AG04450 (cell line): ENCODE measurements at regions of chr12 and their contacts with region 1.

Region 1: DNA sequence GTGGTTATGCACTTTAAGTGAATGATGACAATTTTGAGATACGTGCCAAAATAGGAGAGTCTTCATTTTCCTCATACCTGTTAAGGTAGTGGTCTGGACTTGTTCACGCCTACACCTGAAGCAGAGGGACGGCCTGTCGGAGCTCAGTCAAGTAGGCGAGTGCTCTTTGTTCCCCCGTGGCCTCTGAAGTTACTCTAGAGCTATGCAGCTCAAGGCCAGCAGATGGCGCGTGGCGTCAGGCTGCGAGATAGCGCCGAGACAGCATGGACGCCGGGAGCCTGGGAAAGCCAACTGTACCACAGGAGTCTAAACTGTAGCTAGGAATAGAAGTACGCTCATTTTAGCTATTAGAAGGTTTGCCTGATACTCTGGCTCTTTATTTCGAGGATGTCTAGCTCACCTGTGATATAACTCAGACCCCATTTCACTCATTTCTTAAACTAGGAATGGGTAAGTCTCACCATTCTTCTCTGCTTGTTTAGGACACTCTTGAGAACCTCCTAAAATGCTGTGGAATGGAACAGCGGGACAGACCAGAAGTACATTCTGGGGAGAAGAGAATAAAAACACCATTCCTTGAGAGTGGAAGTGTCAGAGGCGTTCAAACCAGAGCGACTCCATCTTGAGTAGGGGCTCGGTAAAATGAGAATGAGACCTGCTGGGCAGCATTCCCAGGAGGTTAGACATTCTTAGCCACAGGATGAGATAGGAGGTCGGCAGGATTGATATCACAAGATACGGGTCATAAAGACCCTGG is 267.4 kb upstream of the HMGA2 start:
- DNase-seq: peak; percentile 69
- H3K4me3 ChIP-seq: no peak overlapping the region
- H3K27ac ChIP-seq: no peak overlapping the region
- H3K27me3 ChIP-seq: no peaks in the 10 kb centered on the region
- CTCF ChIP-seq: peak; percentile 90

Region 2: GRCh38 chr12:64696080-64696741 is 860.6 kb before region 1 on chr12:
- CTCF ChIA-PET with region 1: no interaction called
- POLR2A ChIA-PET with region 1: no interaction called
- DNase-seq: no peak
- H3K4me3 ChIP-seq: no peak overlapping the region
- H3K27ac ChIP-seq: no peak overlapping the region
- H3K27me3 ChIP-seq: no peaks in the 10 kb centered on the region
- CTCF ChIP-seq: peak; percentile 34; the same call in 1 of the 2 replicates

Region 3: GRCh38 chr12:64826234-64826633 is 730.6 kb before region 1 on chr12:
- CTCF ChIA-PET with region 1: no interaction called
- POLR2A ChIA-PET with region 1: no interaction called
- DNase-seq: no peak
- H3K4me3 ChIP-seq: no peak overlapping the region
- H3K27ac ChIP-seq: no peak overlapping the region
- H3K27me3 ChIP-seq: peaks cover 46% of the 10 kb centered on the region
- CTCF ChIP-seq: no peak

Region 4: GRCh38 chr12:65139389-65139788 is 417.5 kb before region 1 on chr12:
- CTCF ChIA-PET with region 1: no interaction called
- POLR2A ChIA-PET with region 1: no interaction called
- DNase-seq: no peak
- H3K4me3 ChIP-seq: no peak overlapping the region
- H3K27ac ChIP-seq: no peak overlapping the region
- H3K27me3 ChIP-seq: peaks cover 13% of the 10 kb centered on the region
- CTCF ChIP-seq: no peak

Region 5: DNA sequence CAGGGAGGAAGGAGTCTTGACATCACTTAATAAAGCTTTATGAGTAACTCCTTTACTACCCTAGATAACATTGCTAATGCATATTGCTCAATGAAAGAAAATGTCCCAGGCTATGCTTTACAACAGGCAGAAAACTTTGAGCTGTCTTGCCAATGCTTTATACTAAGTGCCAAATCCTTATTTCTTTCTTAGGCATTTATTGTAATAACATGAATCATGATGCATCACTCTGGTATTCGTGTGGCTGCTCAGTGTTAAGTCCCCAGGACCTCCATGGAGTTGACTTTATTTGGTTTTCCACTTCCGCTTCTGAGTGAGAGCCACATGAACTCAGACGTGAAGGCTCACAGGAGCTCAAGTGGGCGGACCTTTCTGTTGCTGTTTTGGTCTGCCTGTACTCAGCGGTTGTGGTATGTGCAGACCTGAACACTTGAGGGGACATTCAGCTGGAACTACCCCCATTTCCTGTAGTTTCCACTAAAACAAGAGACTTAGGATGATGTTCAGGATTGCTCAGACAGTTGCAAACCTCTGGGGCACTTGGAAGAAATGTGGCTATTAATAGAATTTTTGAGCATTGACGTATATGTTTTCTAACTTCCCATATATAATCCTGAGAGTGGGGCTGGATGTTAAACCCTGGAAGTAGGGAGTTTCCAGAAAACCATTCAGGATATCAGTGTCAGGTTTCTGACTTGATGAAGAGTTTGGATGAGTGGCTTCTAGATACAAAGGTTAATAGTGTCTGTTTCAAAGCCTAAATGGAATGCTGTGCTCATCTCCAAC is 19.8 kb before region 1 on chr12:
- CTCF ChIA-PET with region 1: interaction called, 14 read pairs
- POLR2A ChIA-PET with region 1: no interaction called
- DNase-seq: peak; percentile 99
- H3K4me3 ChIP-seq: no peak overlapping the region
- H3K27ac ChIP-seq: peak overlapping the region; percentile 93
- H3K27me3 ChIP-seq: no peaks in the 10 kb centered on the region
- CTCF ChIP-seq: no peak

Region 6: DNA sequence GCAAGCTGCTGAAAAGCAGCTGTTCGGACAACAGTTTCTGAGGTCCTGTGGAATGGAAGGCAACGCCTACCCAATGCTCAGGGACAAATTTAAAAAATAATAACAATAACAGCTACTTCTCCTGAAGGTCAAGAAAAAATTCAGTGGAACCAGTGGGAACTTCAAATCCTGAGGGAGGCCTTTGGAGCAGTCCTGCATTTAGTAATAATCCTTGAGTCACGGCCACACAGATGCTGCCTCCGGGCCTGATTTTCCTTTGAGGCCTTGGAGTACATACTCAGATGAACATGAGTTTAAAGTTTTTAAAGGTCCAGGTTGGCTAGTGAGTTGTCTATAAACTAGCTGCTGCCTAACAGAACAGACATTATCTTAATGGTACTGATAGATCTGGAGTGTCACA is 10.3 kb before region 1 on chr12:
- CTCF ChIA-PET with region 1: interaction called, 15 read pairs
- POLR2A ChIA-PET with region 1: no interaction called
- DNase-seq: no peak
- H3K4me3 ChIP-seq: no peak overlapping the region
- H3K27ac ChIP-seq: no peak overlapping the region
- H3K27me3 ChIP-seq: no peaks in the 10 kb centered on the region
- CTCF ChIP-seq: no peak

Region 7: GRCh38 chr12:65673732-65674131 is 116.9 kb after region 1 on chr12:
- CTCF ChIA-PET with region 1: interaction called, 14 read pairs
- POLR2A ChIA-PET with region 1: no interaction called
- DNase-seq: no peak
- H3K4me3 ChIP-seq: no peak overlapping the region
- H3K27ac ChIP-seq: no peak overlapping the region
- H3K27me3 ChIP-seq: no peaks in the 10 kb centered on the region
- CTCF ChIP-seq: peak; percentile 29

Region 8: DNA sequence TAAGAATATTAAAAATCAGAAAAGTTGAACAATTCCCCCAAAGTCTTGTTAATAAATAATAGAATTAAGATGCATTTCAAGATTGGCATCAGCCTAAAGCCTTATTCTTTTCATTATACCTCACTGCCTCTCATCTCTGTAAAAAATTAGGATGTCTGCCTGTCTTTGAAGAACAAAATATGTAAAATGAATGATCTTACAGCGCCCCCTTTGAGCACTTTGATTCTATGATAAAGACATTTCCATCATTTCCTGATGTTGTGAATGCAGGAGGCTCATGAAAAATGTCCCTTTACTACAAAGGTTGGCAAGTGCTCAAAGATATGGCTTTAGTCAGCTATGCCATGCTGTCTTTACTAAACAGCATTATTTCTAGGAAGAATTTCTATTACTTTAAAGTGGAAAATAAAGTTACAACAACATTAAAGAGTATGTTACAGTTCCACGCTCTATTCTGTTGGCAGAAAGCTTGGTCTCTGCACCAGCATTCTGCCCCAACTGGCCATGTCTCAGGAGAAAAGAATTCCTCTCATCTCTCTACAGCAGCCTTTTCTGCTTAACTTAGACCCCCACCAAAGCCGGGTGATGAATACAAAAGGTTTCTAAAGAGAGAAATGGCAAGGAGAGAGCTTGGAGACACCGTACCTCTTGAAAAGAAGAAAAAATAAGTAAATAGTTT is 478.6 kb after region 1 on chr12:
- CTCF ChIA-PET with region 1: interaction called, 10 read pairs
- POLR2A ChIA-PET with region 1: no interaction called
- DNase-seq: no peak
- H3K4me3 ChIP-seq: no peak overlapping the region
- H3K27ac ChIP-seq: no peak overlapping the region
- H3K27me3 ChIP-seq: no peaks in the 10 kb centered on the region
- CTCF ChIP-seq: peak; percentile 52

Region 9: GRCh38 chr12:66087365-66087943 is 530.6 kb after region 1 on chr12:
- CTCF ChIA-PET with region 1: interaction called, 19 read pairs
- POLR2A ChIA-PET with region 1: no interaction called
- DNase-seq: peak; percentile 67
- H3K4me3 ChIP-seq: no peak overlapping the region
- H3K27ac ChIP-seq: no peak overlapping the region
- H3K27me3 ChIP-seq: no peaks in the 10 kb centered on the region
- CTCF ChIP-seq: peak; percentile 85

Region 10: GRCh38 chr12:66107451-66107915 is 550.6 kb after region 1 on chr12:
- CTCF ChIA-PET with region 1: interaction called, 11 read pairs
- POLR2A ChIA-PET with region 1: no interaction called
- DNase-seq: peak; percentile 88
- H3K4me3 ChIP-seq: no peak overlapping the region
- H3K27ac ChIP-seq: no peak overlapping the region
- H3K27me3 ChIP-seq: no peaks in the 10 kb centered on the region
- CTCF ChIP-seq: peak; percentile 80